ENCODE measurements at regions of chr6 and their contacts with region 1.

Region 1: DNA sequence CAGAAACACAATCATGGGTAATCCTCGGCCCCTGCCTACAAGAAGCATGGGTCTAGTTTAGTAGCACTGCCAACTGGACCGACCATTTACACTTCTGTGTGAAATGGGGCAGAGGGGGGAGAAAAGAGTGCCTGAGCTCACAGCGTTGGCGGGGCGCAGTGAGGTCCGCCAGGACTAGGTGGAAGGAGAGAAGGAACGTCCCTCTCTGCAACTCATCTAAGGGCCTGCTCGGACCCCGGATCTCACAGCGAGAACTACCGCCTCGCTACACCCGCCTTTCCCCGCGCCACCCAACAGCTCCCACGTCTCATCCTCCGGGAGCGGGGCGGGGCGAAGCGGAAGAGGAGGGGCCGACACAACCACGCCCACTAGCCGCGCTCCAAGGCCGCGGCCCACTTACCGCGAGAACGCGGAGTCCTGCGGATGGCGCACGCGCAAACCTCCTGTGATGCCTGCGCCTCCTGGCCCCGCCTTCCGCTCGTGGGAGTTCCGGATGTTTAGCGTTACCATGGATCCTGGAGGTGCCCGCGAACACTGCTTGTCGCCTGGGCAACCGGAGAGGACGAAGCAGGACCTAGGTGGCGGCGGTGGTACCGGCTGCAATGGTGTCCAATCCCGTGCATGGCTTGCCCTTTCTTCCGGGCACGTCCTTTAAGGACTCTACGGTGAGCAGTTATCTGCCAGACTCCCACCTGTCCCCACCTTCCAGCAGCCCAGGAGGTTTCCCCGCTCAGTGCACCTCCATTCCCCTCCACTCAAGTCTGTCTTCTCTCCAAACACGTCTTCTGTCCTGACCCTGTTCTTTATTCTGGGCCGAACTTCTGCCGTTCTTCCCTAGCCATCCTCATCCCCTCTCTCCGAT is at the start of gene EFHC1:
- DNase-seq: peak; percentile 99
- H3K4me3 Mint-ChIP-seq: no peak within 1 kb of the TSS
- H3K27ac Mint-ChIP-seq: peak within 1 kb of the TSS; percentile 88
- H3K4me1 Mint-ChIP-seq: peaks cover 22% of the 10 kb centered on the region
- H3K27me3 Mint-ChIP-seq: no peaks in the 10 kb centered on the region
- total RNA-seq, gene EFHC1: 1.2 to 3.1 TPM

Region 2: DNA sequence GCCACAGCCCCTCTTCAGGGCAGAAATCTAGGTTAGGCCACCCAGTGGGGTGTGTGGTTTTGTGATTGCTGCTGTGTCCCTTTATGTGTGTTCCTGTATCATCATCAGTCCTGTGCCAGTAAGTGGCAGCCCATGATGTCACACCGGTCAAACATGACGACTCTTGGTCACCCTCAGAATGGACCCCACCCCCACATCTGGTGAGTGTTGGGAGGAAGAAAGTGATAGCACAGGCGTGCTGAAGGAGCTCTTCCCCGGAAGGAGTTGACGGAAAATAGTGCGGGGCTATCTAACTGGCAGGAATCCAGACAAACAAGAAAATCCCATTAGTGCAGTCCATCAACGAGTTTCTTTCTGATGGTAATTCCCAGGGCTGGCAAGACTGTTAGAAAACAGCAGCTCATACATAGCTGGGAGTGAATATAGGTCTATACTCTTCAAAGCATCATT is 267.3 kb before region 1 on chr6:
- CTCF ChIA-PET with region 1: no interaction called
- intact Hi-C with region 1: no loop called
- DNase-seq: no peak
- H3K4me3 Mint-ChIP-seq: no peak overlapping the region
- H3K27ac Mint-ChIP-seq: no peak overlapping the region
- H3K4me1 Mint-ChIP-seq: peaks cover 22% of the 10 kb centered on the region
- H3K27me3 Mint-ChIP-seq: peaks cover 27% of the 10 kb centered on the region

Region 3: GRCh38 chr6:52399511-52400312 is 20.3 kb before region 1 on chr6:
- CTCF ChIA-PET with region 1: interaction called, 21 read pairs
- intact Hi-C with region 1: loop called (anchors 1 kb)
- DNase-seq: peak; percentile 64
- H3K4me3 Mint-ChIP-seq: no peak overlapping the region
- H3K27ac Mint-ChIP-seq: peak overlapping the region; percentile 73
- H3K4me1 Mint-ChIP-seq: peaks cover 72% of the 10 kb centered on the region
- H3K27me3 Mint-ChIP-seq: no peaks in the 10 kb centered on the region

Region 4: DNA sequence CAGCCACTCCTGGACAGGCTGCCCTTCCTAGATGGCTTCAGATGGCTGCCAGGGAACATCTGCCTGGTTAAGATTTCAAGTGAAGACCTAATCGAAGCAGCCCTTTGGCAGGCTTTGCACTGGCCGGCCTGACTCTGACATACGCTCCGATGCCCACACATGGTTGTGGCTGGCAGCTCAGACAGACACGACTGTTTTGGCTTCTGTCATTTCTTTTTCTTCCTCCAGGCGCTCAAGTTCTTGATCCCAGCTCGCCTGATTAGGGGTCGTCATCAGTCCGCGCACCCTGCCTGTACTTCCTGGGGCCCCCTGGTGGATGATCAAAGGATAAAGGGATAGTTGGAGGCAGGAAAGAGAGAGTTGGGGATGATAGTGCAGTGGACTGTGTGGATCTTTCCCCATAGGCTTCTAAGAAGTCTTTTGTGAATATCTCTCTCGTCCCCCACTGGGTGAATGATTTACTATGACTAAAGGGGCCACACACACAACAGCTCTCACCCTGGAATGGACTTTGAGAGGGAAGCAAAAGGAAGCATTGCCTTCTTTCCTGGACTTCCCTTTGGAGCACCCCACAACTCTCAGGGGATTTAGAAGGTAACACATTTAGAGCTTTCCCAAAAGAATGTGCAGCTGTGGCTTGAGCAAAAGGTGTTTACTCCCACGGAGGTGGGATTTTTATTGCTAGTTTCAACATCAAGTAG is 178.2 kb after region 1 on chr6:
- CTCF ChIA-PET with region 1: interaction called, 3 read pairs
- intact Hi-C with region 1: loop called (anchors 1 kb)
- DNase-seq: peak; percentile 35
- H3K4me3 Mint-ChIP-seq: no peak overlapping the region
- H3K27ac Mint-ChIP-seq: no peak overlapping the region
- H3K4me1 Mint-ChIP-seq: peaks cover 14% of the 10 kb centered on the region
- H3K27me3 Mint-ChIP-seq: no peaks in the 10 kb centered on the region

Region 5: DNA sequence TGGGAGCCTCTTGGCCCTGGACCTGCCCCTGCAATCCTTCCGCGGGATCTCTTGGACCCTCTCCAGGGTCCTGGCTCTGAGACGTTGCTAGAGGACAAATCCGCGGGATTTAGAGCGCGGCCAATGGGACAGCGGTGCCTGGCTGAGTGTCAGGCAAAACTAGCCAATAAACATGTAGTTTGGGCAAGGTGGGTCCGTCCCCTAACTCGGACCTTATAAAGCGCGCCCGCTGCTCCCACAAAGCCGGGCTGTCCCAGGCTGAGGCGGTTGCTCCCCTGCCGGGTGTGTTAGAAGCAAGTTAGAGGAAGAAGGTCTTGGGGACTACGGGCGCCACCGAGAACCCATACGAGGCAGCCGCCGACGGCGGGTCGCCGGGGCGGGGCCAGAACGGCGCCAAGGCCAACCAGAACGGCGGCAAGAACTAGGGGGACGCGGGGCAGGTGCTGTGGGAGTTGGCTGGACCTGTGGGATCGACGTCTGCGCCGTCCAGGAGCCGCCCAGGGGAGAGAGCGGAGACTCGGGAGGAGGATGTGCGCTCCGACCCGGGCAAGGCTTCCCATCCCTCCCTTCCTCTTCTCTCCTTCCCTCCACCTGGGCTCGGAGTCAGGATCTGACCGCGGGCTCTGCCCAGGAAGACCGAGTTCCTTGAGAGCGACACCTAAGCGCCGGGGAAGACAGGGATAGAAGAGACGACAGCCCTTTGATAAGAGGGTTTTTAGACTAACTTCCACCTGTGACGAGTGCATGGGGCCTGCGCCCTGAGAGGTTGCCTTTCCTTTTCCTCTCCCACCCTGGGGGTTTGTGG is 244.3 kb after region 1 on chr6:
- CTCF ChIA-PET with region 1: interaction called, 77 read pairs
- intact Hi-C with region 1: loop called (anchors 1 kb)
- DNase-seq: peak; percentile 86
- H3K4me3 Mint-ChIP-seq: no peak overlapping the region
- H3K27ac Mint-ChIP-seq: no peak overlapping the region
- H3K4me1 Mint-ChIP-seq: peaks cover 3% of the 10 kb centered on the region
- H3K27me3 Mint-ChIP-seq: no peaks in the 10 kb centered on the region

Region 6: GRCh38 chr6:52815167-52816092 is 395.4 kb after region 1 on chr6:
- CTCF ChIA-PET with region 1: no interaction called
- intact Hi-C with region 1: loop called (anchors 10 kb)
- DNase-seq: peak; percentile 67
- H3K4me3 Mint-ChIP-seq: no peak overlapping the region
- H3K27ac Mint-ChIP-seq: no peak overlapping the region
- H3K4me1 Mint-ChIP-seq: no peaks in the 10 kb centered on the region
- H3K27me3 Mint-ChIP-seq: no peaks in the 10 kb centered on the region

Region 7: DNA sequence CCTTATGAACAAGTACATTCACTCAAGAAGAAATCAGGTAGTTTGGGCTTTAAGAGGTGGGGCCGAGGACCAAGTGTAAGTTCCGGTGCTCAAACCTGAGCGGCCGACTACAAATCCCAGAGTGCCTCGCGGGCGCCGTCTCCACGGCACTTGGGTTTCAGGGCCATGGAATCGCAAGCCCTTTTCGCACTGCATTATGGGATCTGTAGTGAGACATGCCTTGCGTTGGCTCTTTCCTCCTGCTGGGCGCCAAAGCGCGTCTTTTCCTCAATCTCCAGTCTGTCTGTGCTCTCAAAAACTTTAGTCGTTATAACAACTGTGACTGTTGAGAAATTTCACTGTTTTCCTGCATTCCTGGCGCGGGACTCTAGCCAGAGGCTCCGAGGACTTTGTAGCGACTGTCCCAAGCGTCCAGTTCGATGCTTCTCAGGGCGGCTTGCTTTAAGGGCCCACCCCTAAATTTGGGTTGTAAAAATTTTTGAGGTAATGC is 644.7 kb after region 1 on chr6:
- CTCF ChIA-PET with region 1: no interaction called
- intact Hi-C with region 1: loop called (anchors 1 kb)
- DNase-seq: peak; percentile 99
- H3K4me3 Mint-ChIP-seq: peak overlapping the region; percentile 97
- H3K27ac Mint-ChIP-seq: peak overlapping the region; percentile 99
- H3K4me1 Mint-ChIP-seq: peaks cover 55% of the 10 kb centered on the region
- H3K27me3 Mint-ChIP-seq: no peaks in the 10 kb centered on the region

Region 8: DNA sequence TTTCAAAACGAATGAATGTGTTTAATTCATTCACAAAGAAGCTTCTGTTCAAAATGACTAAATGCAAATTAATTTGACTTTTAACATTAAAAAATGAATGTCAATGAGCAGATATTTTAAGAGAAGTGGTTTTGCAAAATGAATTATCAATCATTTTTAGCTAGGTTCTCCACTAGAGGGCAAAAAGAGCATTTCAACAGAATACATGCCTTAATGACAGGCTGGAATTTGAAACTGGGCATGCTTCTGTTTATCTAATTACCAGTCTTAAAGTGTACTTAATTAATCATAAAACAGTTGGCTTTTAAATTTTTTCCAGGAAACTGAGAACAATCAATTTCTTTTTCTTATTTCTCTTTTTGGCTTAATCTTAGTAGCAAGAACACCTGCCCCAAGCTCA is 1824.4 kb after region 1 on chr6:
- CTCF ChIA-PET with region 1: no interaction called
- intact Hi-C with region 1: no loop called
- DNase-seq: no peak
- H3K4me3 Mint-ChIP-seq: no peak overlapping the region
- H3K27ac Mint-ChIP-seq: no peak overlapping the region
- H3K4me1 Mint-ChIP-seq: no peaks in the 10 kb centered on the region
- H3K27me3 Mint-ChIP-seq: no peaks in the 10 kb centered on the region